Endothelial cell of umbilical vein (primary cell): ENCODE measurements at regions of chr10 and their contacts with region 1.

Region 1: GRCh38 chr10:122565728-122566206 is 5.2 kb downstream of the DMBT1 start:
- DNase-seq: peak; percentile 89
- H3K4me3 ChIP-seq: no peak overlapping the region
- H3K27ac ChIP-seq: no peak overlapping the region
- H3K4me1 ChIP-seq: no peaks in the 10 kb centered on the region
- H3K27me3 ChIP-seq: peaks cover 19% of the 10 kb centered on the region in 2 experiments
- CTCF ChIP-seq: peak; percentile 71 to 76
- POLR2A ChIP-seq: no peak

Region 2: GRCh38 chr10:122051251-122051996 is 514.3 kb before region 1 on chr10:
- CTCF ChIA-PET with region 1: interaction called, 5 read pairs
- POLR2A ChIA-PET with region 1: no interaction called
- dilution Hi-C with region 1: no loop called
- intact Hi-C with region 1: loop called (anchors 5 kb)
- DNase-seq: peak; percentile 77
- H3K4me3 ChIP-seq: no peak overlapping the region
- H3K27ac ChIP-seq: no peak overlapping the region
- H3K4me1 ChIP-seq: peaks cover 15% of the 10 kb centered on the region
- H3K27me3 ChIP-seq: no peaks in the 10 kb centered on the region
- CTCF ChIP-seq: peak; percentile 75 to 89
- POLR2A ChIP-seq: no peak

Region 3: DNA sequence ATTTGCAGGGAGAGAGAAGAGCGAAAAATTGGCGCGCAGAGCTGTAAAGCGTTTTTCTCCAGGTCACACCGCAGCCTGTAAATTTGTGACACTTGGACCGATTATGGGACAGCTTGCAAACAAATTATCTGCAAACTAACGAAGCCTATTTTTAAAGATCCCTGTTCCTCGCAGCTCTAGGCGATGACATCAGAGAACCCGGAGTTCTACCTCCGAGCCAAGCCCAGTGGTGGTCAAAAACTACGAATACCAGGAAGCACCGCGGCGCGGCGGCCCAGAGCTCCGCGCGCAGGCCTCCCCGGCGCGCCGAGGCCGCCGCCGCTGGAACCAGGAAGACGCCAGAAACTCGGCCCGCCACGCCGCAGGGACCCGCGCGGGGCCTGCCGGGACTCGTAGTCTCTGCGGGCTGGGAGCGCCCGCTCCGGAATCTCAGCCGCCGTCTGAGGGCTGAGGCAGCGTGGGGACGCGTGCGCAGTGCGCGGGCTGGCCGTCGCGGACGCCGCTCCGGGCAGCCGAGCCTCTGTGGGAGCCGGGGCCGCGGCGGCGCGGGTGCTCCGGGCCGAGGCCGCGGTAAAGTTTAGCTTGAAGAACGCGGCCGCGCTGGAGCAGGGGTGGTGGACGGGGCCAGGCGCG is 191.4 kb before region 1 on chr10 and contains the start of gene PLEKHA1:
- CTCF ChIA-PET with region 1: interaction called, 19 read pairs
- POLR2A ChIA-PET with region 1: no interaction called
- dilution Hi-C with region 1: no loop called
- intact Hi-C with region 1: loop called (anchors 1 kb)
- DNase-seq: peak; percentile 96
- H3K4me3 ChIP-seq: peak within 1 kb of the TSS; percentile 85 to 93 (median 89)
- H3K27ac ChIP-seq: peak within 1 kb of the TSS; percentile 84
- H3K4me1 ChIP-seq: peaks cover 15% of the 10 kb centered on the region
- H3K27me3 ChIP-seq: no peaks in the 10 kb centered on the region
- CTCF ChIP-seq: no peak
- POLR2A ChIP-seq: peak; percentile 56
- total RNA-seq, gene PLEKHA1: 58.0 and 58.8 TPM in 2 replicates

Region 4: DNA sequence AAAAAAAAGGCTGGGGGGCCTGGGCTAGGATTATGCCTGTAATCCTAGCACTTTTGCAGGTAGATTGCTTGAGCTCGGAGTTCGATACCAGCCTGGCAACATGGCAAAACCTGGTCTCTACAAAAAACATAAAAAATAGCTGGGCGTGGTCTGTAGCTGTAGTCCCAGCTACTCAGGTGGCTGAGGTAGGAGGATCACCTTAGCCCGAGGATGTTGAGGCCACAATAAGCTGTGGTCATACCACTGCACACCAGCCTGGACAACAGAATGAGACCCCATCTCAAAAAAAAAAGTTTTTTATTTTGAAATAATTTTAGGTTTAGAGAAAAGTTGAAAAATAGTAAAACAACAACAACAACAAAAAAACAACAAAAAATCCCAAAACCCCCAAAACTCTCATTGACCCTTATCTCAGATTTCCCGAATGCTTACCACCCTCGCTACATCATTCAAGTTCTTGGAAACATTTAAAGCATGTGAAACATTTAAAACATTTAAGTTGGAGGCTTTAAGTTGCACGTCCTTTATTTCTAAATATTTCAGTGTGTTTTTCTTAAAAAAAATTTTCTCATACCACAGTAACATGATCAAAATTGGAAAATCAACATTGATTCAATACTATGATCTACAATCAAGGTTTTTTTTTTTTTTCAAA is 111.8 kb before region 1 on chr10:
- CTCF ChIA-PET with region 1: interaction called, 15 read pairs
- POLR2A ChIA-PET with region 1: no interaction called
- dilution Hi-C with region 1: no loop called
- intact Hi-C with region 1: no loop called
- DNase-seq: no peak
- H3K4me3 ChIP-seq: no peak overlapping the region
- H3K27ac ChIP-seq: no peak overlapping the region
- H3K4me1 ChIP-seq: peaks cover 17% of the 10 kb centered on the region
- H3K27me3 ChIP-seq: no peaks in the 10 kb centered on the region
- CTCF ChIP-seq: no peak
- POLR2A ChIP-seq: no peak

Region 5: DNA sequence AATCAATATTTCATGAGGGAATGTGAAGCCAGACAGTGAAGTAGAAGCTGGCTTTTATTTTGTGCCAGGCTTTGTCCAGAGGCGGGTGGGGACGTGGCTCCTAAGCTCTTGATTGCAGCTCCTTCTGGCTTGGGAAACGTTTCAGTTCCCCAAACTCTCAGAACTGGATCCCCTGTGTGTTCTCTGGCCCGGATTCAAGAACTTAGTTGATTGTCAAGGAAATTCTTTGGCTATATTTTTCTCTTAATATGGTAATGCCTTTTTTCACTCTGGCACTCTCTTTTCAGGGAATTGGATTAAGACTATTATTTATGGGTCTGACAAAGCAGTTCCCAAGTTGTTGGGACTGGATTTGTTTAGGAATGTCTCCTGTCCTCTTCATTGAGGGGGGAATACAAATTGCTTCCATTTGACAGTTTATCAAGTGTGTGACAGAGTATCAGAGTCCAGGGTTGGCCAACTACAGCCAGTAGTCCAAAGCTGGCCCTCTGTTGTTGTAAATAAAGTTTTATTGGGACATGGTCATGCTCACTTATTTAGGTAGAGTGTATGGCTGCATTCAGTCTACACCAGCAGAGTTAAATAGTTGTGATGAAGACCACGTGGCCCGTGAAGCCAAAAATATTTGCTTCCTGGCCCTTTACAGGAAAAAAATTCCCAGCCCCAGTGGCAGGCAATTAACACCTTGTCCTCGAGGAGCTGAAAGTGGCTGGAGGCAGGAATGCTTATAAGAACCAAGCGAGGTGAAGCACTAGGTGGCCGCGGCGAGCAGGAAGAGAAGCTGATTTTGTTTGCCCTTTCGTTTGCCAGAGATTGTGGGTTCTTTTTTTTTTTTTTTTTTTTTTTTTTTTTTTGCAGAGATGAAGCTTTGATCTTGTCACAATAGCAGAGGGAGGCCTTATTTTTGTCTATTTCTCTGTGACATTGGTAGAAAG is 70.1 kb before region 1 on chr10:
- CTCF ChIA-PET with region 1: interaction called, 49 read pairs
- POLR2A ChIA-PET with region 1: interaction called, 3 read pairs
- dilution Hi-C with region 1: no loop called
- intact Hi-C with region 1: no loop called
- DNase-seq: peak; percentile 72
- H3K4me3 ChIP-seq: peak overlapping the region in 1 of 3 experiments; percentile 32
- H3K27ac ChIP-seq: peak overlapping the region; percentile 91
- H3K4me1 ChIP-seq: peaks cover 32% of the 10 kb centered on the region
- H3K27me3 ChIP-seq: no peaks in the 10 kb centered on the region
- CTCF ChIP-seq: no peak
- POLR2A ChIP-seq: no peak

Region 6: DNA sequence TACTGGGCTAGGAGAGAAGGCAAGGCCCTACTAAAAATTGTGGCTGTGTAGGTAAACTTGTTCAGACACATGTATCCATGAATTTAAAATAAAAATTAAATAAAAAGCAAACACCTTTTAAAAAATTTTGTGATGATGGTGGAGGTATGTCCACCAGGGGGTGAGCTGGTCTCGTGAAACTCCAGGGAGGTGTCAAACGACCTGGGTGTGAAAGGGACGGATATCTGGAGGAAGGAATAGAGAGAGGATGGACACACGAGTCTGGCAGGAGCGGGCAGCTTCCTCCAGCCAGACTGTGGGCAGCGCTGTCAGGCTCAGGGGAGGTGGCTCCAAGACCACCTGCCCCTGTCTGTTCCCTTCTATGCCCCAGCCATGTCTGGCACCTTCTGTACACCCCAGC is 40.0 kb before region 1 on chr10:
- CTCF ChIA-PET with region 1: interaction called, 85 read pairs
- POLR2A ChIA-PET with region 1: no interaction called
- dilution Hi-C with region 1: no loop called
- intact Hi-C with region 1: loop called (anchors 1 kb)
- DNase-seq: peak; percentile 42
- H3K4me3 ChIP-seq: no peak overlapping the region
- H3K27ac ChIP-seq: no peak overlapping the region
- H3K4me1 ChIP-seq: peaks cover 18% of the 10 kb centered on the region
- H3K27me3 ChIP-seq: no peaks in the 10 kb centered on the region
- CTCF ChIP-seq: peak; percentile 20 to 31
- POLR2A ChIP-seq: no peak

Region 7: GRCh38 chr10:123559066-123559822 is 993.5 kb after region 1 on chr10:
- CTCF ChIA-PET with region 1: no interaction called
- POLR2A ChIA-PET with region 1: no interaction called
- dilution Hi-C with region 1: no loop called
- intact Hi-C with region 1: loop called (anchors 5 kb)
- DNase-seq: peak; percentile 56
- H3K4me3 ChIP-seq: no peak overlapping the region
- H3K27ac ChIP-seq: no peak overlapping the region
- H3K4me1 ChIP-seq: no peaks in the 10 kb centered on the region
- H3K27me3 ChIP-seq: no peaks in the 10 kb centered on the region
- CTCF ChIP-seq: peak; percentile 91 to 96
- POLR2A ChIP-seq: no peak